ENCODE measurements at regions of chr13 and their contacts with region 1.

Region 1: DNA sequence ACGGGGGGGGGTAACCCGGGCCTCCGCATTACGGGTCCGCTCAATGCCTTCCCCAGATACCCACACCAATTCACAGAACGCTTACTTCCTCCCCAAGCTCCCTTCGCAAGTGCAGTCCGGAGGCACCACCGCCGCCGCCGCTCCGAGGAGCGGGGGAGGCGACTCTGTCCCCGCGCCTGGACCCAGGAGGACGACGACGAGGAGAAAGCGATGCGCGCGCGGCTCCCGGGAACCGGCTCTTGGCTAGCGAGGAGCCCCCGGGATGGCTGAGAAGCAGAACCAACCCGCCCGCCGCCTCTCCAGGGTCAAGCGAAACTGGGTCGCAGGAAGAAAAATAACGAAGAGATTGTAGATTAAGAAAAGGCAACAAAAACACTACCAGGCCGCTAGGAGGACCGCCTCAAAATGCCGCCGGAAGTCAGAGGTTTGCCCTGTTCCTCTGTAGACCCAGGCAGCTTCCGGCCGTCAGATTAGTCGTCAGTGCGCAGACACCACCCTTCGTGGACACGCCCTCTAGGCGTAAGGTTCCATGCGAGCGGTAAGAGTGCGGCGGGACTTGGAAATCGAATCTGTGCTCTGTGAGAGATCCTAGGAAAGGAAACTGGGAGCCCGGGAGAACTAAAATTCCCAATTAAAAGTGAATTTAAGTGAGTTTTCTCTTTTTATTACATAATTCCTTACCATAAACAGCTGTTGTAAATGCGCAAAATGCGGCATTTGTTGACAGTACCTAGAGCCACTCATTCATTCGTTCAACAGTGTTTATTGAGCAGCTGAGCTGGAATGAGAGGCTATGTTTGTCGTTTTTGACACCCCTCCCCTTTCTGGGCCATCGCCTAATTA is at the start of gene ZC3H13:
- DNase-seq: peak; percentile 75 to 95 (median 92)
- ATAC-seq: peak; percentile 100
- H3K4me3 ChIP-seq: peak within 1 kb of the TSS; percentile 89
- H3K4me3 Mint-ChIP-seq: peak within 1 kb of the TSS; percentile 87 to 96 (median 94)
- H3K27ac ChIP-seq: peak within 1 kb of the TSS; percentile 98
- H3K27ac Mint-ChIP-seq: peak within 1 kb of the TSS; percentile 93 to 99 (median 97)
- H3K4me1 ChIP-seq: peaks cover 22 to 26% of the 10 kb centered on the region in 2 donors
- H3K4me1 Mint-ChIP-seq: peaks cover 19 to 63% (median 46%) of the 10 kb centered on the region in 7 donors
- H3K27me3 ChIP-seq: no peaks in the 10 kb centered on the region
- H3K27me3 Mint-ChIP-seq: peaks cover 5 to 32% (median 15%) of the 10 kb centered on the region in 5 donors
- total RNA-seq, gene ZC3H13: 41.1 to 67.0 (median 46.5) TPM

Region 2: GRCh38 chr13:44917589-44918325 is 1134.8 kb before region 1 on chr13:
- CTCF ChIA-PET with region 1: no interaction called
- POLR2A ChIA-PET with region 1: no interaction called
- intact Hi-C with region 1: loop called in 1 of 2 experiments (anchors 1 kb)
- DNase-seq: peak; percentile 95 to 98 (median 97)
- ATAC-seq: peak; percentile 85
- H3K4me3 ChIP-seq: peak overlapping the region; percentile 89
- H3K4me3 Mint-ChIP-seq: no peak overlapping the region
- H3K27ac ChIP-seq: peak overlapping the region; percentile 75
- H3K27ac Mint-ChIP-seq: no peak overlapping the region
- H3K4me1 ChIP-seq: peaks cover 5 to 9% of the 10 kb centered on the region in 2 donors
- H3K4me1 Mint-ChIP-seq: peaks cover 2 to 19% (median 7%) of the 10 kb centered on the region in 7 donors
- H3K27me3 ChIP-seq: no peaks in the 10 kb centered on the region
- H3K27me3 Mint-ChIP-seq: peaks cover 0 to 4% (median 0%) of the 10 kb centered on the region in 5 donors

Region 3: GRCh38 chr13:45340926-45341750 is 711.4 kb before region 1 on chr13 and contains the start of gene TPT1:
- CTCF ChIA-PET with region 1: no interaction called
- POLR2A ChIA-PET with region 1: no interaction called
- intact Hi-C with region 1: loop called (anchors 1 to 5 kb)
- DNase-seq: peak; percentile 99 to 100 (median 99)
- ATAC-seq: peak; percentile 91
- H3K4me3 ChIP-seq: peak within 1 kb of the TSS; percentile 94
- H3K4me3 Mint-ChIP-seq: peak within 1 kb of the TSS; percentile 95 to 100 (median 98)
- H3K27ac ChIP-seq: peak within 1 kb of the TSS; percentile 99
- H3K27ac Mint-ChIP-seq: peak within 1 kb of the TSS; percentile 92 to 100 (median 99)
- H3K4me1 ChIP-seq: peaks cover 35 to 43% of the 10 kb centered on the region in 2 donors
- H3K4me1 Mint-ChIP-seq: peaks cover 35 to 70% (median 57%) of the 10 kb centered on the region in 7 donors
- H3K27me3 ChIP-seq: no peaks in the 10 kb centered on the region
- H3K27me3 Mint-ChIP-seq: no peaks in the 10 kb centered on the region
- total RNA-seq, gene TPT1: 4,230 to 13,134 (median 7,796) TPM

Region 4: DNA sequence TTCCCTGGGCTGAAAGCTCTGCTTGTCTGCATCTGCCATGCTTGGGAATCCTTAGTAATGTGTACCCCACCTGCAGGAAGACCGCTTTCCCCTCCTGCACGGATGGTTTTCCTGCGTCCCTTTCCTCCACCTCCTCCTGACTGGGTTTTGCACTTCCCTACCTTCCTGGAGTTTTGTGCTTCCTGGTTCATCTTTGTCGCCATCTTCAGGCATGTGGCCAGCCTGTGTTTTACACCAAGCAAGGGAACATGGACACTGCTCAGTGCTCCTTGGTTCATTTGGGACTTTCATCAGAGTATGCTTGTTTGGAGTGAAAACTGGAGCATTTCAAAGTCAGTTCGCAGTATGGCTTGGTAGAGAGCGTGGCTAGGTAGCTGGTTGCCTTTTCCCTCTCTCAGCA is 467.7 kb before region 1 on chr13:
- CTCF ChIA-PET with region 1: no interaction called
- POLR2A ChIA-PET with region 1: no interaction called
- intact Hi-C with region 1: no loop called
- DNase-seq: no peak
- ATAC-seq: no peak
- H3K4me3 ChIP-seq: no peak overlapping the region
- H3K4me3 Mint-ChIP-seq: no peak overlapping the region
- H3K27ac ChIP-seq: no peak overlapping the region
- H3K27ac Mint-ChIP-seq: no peak overlapping the region
- H3K4me1 ChIP-seq: no peaks in the 10 kb centered on the region
- H3K4me1 Mint-ChIP-seq: peaks cover 0 to 2% (median 0%) of the 10 kb centered on the region in 7 donors
- H3K27me3 ChIP-seq: peaks cover 0 to under 1% of the 10 kb centered on the region in 2 donors
- H3K27me3 Mint-ChIP-seq: peaks cover 2 to 15% (median 7%) of the 10 kb centered on the region in 5 donors

Region 5: GRCh38 chr13:45847554-45848224 is 204.9 kb before region 1 on chr13:
- CTCF ChIA-PET with region 1: no interaction called
- POLR2A ChIA-PET with region 1: interaction called, 3 read pairs
- intact Hi-C with region 1: loop called in 1 of 2 experiments (anchors 1 kb)
- DNase-seq: peak; percentile 15 to 83 (median 78)
- ATAC-seq: peak; percentile 79
- H3K4me3 ChIP-seq: peak overlapping the region; percentile 11
- H3K4me3 Mint-ChIP-seq: peak overlapping the region; percentile 61 to 89 (median 76)
- H3K27ac ChIP-seq: peak overlapping the region; percentile 19
- H3K27ac Mint-ChIP-seq: peak overlapping the region; percentile 14 to 98 (median 90)
- H3K4me1 ChIP-seq: peaks cover 29 to 45% of the 10 kb centered on the region in 2 donors
- H3K4me1 Mint-ChIP-seq: peaks cover 38 to 66% (median 61%) of the 10 kb centered on the region in 7 donors
- H3K27me3 ChIP-seq: no peaks in the 10 kb centered on the region
- H3K27me3 Mint-ChIP-seq: peaks cover 0 to 48% (median 5%) of the 10 kb centered on the region in 5 donors

Region 6: DNA sequence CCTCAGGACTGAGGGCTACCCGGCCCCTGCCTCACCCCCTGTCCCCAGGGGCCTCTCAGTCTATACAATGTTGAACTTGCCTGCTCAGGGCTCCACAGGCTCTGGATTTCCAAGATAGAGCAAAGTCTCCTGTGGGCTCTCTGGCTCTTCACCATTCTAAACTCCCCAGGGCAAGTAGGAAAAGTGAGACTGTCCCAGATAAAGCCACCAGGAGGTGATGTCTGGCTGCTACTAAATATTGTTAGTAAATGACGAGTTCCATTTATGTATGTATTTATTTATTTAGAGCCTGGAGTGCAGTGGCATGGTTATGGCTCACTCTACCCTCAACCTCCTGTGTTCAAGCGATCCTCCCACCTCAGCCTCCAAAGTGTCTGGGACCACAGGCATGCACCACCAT is 127.4 kb before region 1 on chr13:
- CTCF ChIA-PET with region 1: no interaction called
- POLR2A ChIA-PET with region 1: no interaction called
- intact Hi-C with region 1: no loop called
- DNase-seq: no peak
- ATAC-seq: no peak
- H3K4me3 ChIP-seq: no peak overlapping the region
- H3K4me3 Mint-ChIP-seq: no peak overlapping the region
- H3K27ac ChIP-seq: no peak overlapping the region
- H3K27ac Mint-ChIP-seq: no peak overlapping the region
- H3K4me1 ChIP-seq: no peaks in the 10 kb centered on the region
- H3K4me1 Mint-ChIP-seq: no peaks in the 10 kb centered on the region
- H3K27me3 ChIP-seq: no peaks in the 10 kb centered on the region
- H3K27me3 Mint-ChIP-seq: peaks cover 0 to 3% (median 0%) of the 10 kb centered on the region in 5 donors

Region 7: DNA sequence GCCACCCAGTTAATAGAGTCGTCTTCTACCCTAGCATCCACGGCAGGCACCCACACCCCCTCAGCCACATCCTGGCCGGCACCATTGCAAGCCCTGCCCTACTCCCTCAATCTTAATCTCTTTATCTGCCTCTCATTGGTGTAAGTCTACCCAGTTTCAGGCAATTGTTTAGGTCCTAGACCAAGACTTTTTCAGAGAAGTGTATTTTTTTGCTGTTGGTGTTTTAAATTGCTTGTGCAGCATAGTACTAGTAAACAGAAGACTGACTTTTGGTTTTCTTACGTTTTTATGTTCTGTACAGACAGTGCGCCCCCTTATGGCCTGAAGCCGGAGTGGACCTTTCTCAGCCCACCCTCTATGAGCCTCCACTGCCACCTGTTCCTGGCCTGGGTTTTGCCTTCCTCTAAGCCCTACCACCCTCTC is 131.7 kb after region 1 on chr13:
- CTCF ChIA-PET with region 1: no interaction called
- POLR2A ChIA-PET with region 1: no interaction called
- intact Hi-C with region 1: loop called (anchors 1 kb)
- DNase-seq: peak in 8 of 9 donors; percentile 60 to 74 (median 69)
- ATAC-seq: peak; percentile 75
- H3K4me3 ChIP-seq: peak overlapping the region; percentile 83
- H3K4me3 Mint-ChIP-seq: peak overlapping the region; percentile 67 to 99 (median 85)
- H3K27ac ChIP-seq: peak overlapping the region; percentile 82
- H3K27ac Mint-ChIP-seq: peak overlapping the region; percentile 86 to 99 (median 96)
- H3K4me1 ChIP-seq: peaks cover 27 to 35% of the 10 kb centered on the region in 2 donors
- H3K4me1 Mint-ChIP-seq: peaks cover 35 to 48% (median 38%) of the 10 kb centered on the region in 7 donors
- H3K27me3 ChIP-seq: no peaks in the 10 kb centered on the region
- H3K27me3 Mint-ChIP-seq: peaks cover 0 to 3% (median 0%) of the 10 kb centered on the region in 5 donors

Region 8: DNA sequence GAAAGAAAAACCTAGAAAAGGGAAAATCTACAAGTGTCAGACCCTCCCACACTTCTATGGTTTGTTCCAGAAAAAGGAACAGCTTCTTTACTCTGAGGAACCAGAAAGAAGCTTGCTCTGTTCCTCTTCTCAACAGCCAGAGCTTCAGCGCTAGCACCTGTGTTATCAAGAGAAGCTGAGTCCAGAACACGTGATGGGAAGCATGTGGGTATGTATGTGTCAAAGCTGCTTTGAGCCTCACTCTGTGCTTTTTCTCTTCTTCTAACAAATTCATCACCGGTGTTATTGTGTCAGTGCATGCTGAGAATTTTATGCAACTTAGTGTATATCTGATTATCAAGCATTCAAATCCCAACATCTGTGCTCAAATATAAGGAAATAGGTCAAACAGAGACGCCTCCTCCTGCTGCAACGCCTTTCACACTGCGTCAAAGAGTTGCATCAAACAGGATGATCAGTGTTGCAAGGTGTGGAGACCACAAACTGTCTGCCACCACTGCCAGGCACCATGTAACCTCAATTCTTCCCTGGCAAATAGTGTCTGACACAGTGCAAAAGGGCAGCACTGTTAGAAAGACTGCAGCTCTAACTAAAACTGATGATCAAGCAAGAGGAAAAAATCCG is 243.1 kb after region 1 on chr13:
- CTCF ChIA-PET with region 1: interaction called, 3 read pairs
- POLR2A ChIA-PET with region 1: interaction called, 3 read pairs
- intact Hi-C with region 1: loop called in 1 of 2 experiments (anchors 2 kb)
- DNase-seq: peak in 8 of 9 donors; percentile 28 to 90 (median 88)
- ATAC-seq: peak; percentile 94
- H3K4me3 ChIP-seq: peak overlapping the region; percentile 12
- H3K4me3 Mint-ChIP-seq: peak overlapping the region; percentile 4 to 87 (median 76)
- H3K27ac ChIP-seq: peak overlapping the region; percentile 77
- H3K27ac Mint-ChIP-seq: peak overlapping the region; percentile 92 to 99 (median 96)
- H3K4me1 ChIP-seq: peaks cover 35 to 52% of the 10 kb centered on the region in 2 donors
- H3K4me1 Mint-ChIP-seq: peaks cover 36 to 73% (median 68%) of the 10 kb centered on the region in 7 donors
- H3K27me3 ChIP-seq: no peaks in the 10 kb centered on the region
- H3K27me3 Mint-ChIP-seq: no peaks in the 10 kb centered on the region

Region 9: GRCh38 chr13:46796515-46797474 is 744.3 kb after region 1 on chr13 and contains the start of gene ESD:
- CTCF ChIA-PET with region 1: no interaction called
- POLR2A ChIA-PET with region 1: no interaction called
- intact Hi-C with region 1: loop called in 1 of 2 experiments (anchors 2 kb)
- DNase-seq: peak; percentile 75 to 92 (median 85)
- ATAC-seq: peak; percentile 97
- H3K4me3 ChIP-seq: peak within 1 kb of the TSS; percentile 85
- H3K4me3 Mint-ChIP-seq: peak within 1 kb of the TSS; percentile 91 to 99 (median 93)
- H3K27ac ChIP-seq: peak within 1 kb of the TSS; percentile 82
- H3K27ac Mint-ChIP-seq: peak within 1 kb of the TSS; percentile 92 to 99 (median 98)
- H3K4me1 ChIP-seq: peaks cover 14 to 33% of the 10 kb centered on the region in 2 donors
- H3K4me1 Mint-ChIP-seq: peaks cover 20 to 53% (median 48%) of the 10 kb centered on the region in 7 donors
- H3K27me3 ChIP-seq: no peaks in the 10 kb centered on the region
- H3K27me3 Mint-ChIP-seq: peaks cover 0 to 7% (median 0%) of the 10 kb centered on the region in 5 donors
- total RNA-seq, gene ESD: 35.3 to 80.1 (median 57.0) TPM

Region 10: DNA sequence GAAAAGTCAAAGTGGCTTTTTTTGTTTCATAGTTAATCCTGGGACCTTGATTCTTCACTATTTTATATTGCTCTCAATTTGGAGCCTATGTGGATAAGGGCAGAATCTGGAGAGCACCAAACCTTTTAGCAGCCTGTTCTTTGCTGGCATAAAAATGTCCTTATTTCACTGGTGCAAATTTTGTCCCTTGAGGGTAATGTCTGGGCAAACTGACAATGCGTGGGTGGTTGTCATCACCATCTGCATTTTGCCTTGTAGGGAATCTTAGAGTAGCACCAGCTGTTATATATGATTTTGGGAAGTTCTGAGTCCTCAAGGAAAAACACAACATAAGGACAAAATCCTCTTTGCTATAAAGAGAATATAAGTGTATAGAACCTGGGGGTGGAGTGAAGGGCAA is 1181.2 kb after region 1 on chr13:
- CTCF ChIA-PET with region 1: no interaction called
- POLR2A ChIA-PET with region 1: no interaction called
- intact Hi-C with region 1: no loop called
- DNase-seq: no peak
- ATAC-seq: no peak
- H3K4me3 ChIP-seq: no peak overlapping the region
- H3K4me3 Mint-ChIP-seq: no peak overlapping the region
- H3K27ac ChIP-seq: no peak overlapping the region
- H3K27ac Mint-ChIP-seq: no peak overlapping the region
- H3K4me1 ChIP-seq: no peaks in the 10 kb centered on the region
- H3K4me1 Mint-ChIP-seq: no peaks in the 10 kb centered on the region
- H3K27me3 ChIP-seq: no peaks in the 10 kb centered on the region
- H3K27me3 Mint-ChIP-seq: peaks cover 0 to 6% (median 4%) of the 10 kb centered on the region in 5 donors

Measured in naive thymus-derived CD4-positive, alpha-beta T cell (primary cell).